K562 (cell line): ENCODE measurements at regions of chr4 and their contacts with region 1.

Region 1: GRCh38 chr4:186067757-186068385 is 1.1 kb upstream of the TLR3 start:
- DNase-seq: peak in 1 of 4 experiments; percentile 18
- ATAC-seq: peak; percentile 76
- H3K4me3 ChIP-seq: no peak overlapping the region
- H3K27ac ChIP-seq: no peak overlapping the region
- H3K4me1 ChIP-seq: no peaks in the 10 kb centered on the region
- H3K27me3 ChIP-seq: peaks cover 0 to 5% of the 10 kb centered on the region in 2 experiments; a peak in 2 of 5 replicates
- CTCF ChIP-seq: peak in 1 of 3 experiments; percentile 41; a peak in 2 of 6 replicates
- EP300 ChIP-seq: no peak
- POLR2A ChIP-seq: no peak
- RAD21 ChIP-seq: peak; percentile 10 to 37; a peak in 2 of 4 replicates

Region 2: GRCh38 chr4:186137196-186137794 is 69.4 kb after region 1 on chr4:
- CTCF ChIA-PET with region 1: no interaction called
- POLR2A ChIA-PET with region 1: interaction called, 3 read pairs
- in situ Hi-C with region 1: no loop called
- intact Hi-C with region 1: loop called (anchors 2 kb)
- DNase-seq: peak in 1 of 4 experiments; percentile 18
- ATAC-seq: no peak; the same call in 2 of the 3 replicates
- H3K4me3 ChIP-seq: no peak overlapping the region
- H3K27ac ChIP-seq: no peak overlapping the region
- H3K4me1 ChIP-seq: no peaks in the 10 kb centered on the region
- H3K27me3 ChIP-seq: peaks cover 13 to 37% of the 10 kb centered on the region in 2 experiments
- CTCF ChIP-seq: peak; percentile 39 to 63 (median 41); a peak in 3 of 6 replicates
- EP300 ChIP-seq: no peak
- POLR2A ChIP-seq: no peak
- RAD21 ChIP-seq: peak; percentile 31 to 35; a peak in 3 of 4 replicates

Region 3: DNA sequence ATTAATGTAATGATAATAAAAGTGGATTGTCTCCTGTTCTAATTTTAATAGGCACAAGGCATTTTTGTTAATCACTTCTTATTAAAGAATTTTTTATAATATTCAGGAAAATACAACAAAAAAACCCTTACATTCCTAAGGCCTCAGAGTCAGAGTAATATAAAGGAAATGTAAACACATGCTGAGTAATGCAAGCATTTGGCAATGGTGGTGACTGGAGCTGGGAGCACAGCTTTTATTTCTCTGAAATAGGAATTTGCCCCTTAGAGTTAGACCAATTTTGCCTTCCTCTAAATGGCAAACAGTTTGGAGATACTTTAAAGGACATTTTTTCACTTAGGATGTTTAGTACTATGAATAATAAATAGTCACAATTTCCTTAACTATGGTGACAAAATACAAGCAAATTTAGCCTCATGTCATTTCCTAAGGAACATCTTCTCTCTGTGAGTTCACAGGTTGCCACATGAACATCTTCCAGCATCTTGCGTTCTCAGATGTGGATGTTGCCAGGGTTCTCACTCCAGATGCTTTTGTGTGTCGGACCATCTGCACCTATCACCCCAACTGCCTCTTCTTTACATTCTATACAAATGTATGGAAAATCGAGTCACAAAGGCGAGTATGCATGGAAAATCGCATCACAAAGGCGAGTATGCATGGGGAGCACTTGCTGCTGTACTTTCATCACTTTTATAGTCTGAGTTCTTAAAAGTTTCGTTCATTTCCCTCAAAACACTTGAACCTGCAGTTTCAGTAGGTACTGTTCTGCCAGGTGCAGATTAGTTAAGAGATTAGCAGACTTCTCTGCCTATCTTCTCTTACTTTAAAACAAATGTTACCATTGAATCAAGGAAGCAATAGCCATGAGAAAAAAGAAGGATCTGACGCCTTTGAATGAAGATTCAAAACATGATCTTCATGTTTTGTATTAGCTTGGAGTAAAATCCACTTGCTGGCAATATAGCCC is 182.2 kb after region 1 on chr4:
- CTCF ChIA-PET with region 1: no interaction called
- POLR2A ChIA-PET with region 1: no interaction called
- in situ Hi-C with region 1: no loop called
- intact Hi-C with region 1: loop called (anchors 10 kb)
- DNase-seq: no peak
- ATAC-seq: no peak
- H3K4me3 ChIP-seq: no peak overlapping the region
- H3K27ac ChIP-seq: no peak overlapping the region
- H3K4me1 ChIP-seq: no peaks in the 10 kb centered on the region
- H3K27me3 ChIP-seq: peaks cover 0 to 15% of the 10 kb centered on the region in 2 experiments; a peak in 4 of 5 replicates
- CTCF ChIP-seq: no peak
- EP300 ChIP-seq: no peak
- POLR2A ChIP-seq: no peak
- RAD21 ChIP-seq: no peak